MCF 10A (cell line): ENCODE measurements at regions of chr10 and their contacts with region 1.

Region 1: GRCh38 chr10:68156373-68157185 is 47.3 kb downstream of the MYPN start:
- DNase-seq: peak; percentile 80
- H3K4me3 Mint-ChIP-seq: no peak overlapping the region
- H3K27ac Mint-ChIP-seq: no peak overlapping the region
- H3K4me1 Mint-ChIP-seq: peaks cover 9% of the 10 kb centered on the region
- H3K27me3 Mint-ChIP-seq: no peaks in the 10 kb centered on the region
- CTCF ChIP-seq: peak; percentile 86

Region 2: GRCh38 chr10:67788025-67788886 is 368.3 kb before region 1 on chr10:
- CTCF ChIA-PET with region 1: no interaction called
- POLR2A ChIA-PET with region 1: no interaction called
- intact Hi-C with region 1: no loop called
- DNase-seq: peak; percentile 47
- H3K4me3 Mint-ChIP-seq: no peak overlapping the region
- H3K27ac Mint-ChIP-seq: no peak overlapping the region
- H3K4me1 Mint-ChIP-seq: peaks cover 16% of the 10 kb centered on the region
- H3K27me3 Mint-ChIP-seq: no peaks in the 10 kb centered on the region
- CTCF ChIP-seq: peak; percentile 39

Region 3: GRCh38 chr10:67875340-67876238 is 281.0 kb before region 1 on chr10:
- CTCF ChIA-PET with region 1: no interaction called
- POLR2A ChIA-PET with region 1: no interaction called
- intact Hi-C with region 1: no loop called
- DNase-seq: no peak
- H3K4me3 Mint-ChIP-seq: no peak overlapping the region
- H3K27ac Mint-ChIP-seq: no peak overlapping the region
- H3K4me1 Mint-ChIP-seq: no peaks in the 10 kb centered on the region
- H3K27me3 Mint-ChIP-seq: no peaks in the 10 kb centered on the region
- CTCF ChIP-seq: no peak

Region 4: GRCh38 chr10:68074775-68075549 is 81.6 kb before region 1 on chr10 and contains the start of gene HERC4:
- CTCF ChIA-PET with region 1: interaction called, 35 read pairs
- POLR2A ChIA-PET with region 1: interaction called, 11 read pairs
- intact Hi-C with region 1: no loop called
- DNase-seq: peak; percentile 93
- H3K4me3 Mint-ChIP-seq: peak within 1 kb of the TSS; percentile 95
- H3K27ac Mint-ChIP-seq: peak within 1 kb of the TSS; percentile 93
- H3K4me1 Mint-ChIP-seq: peaks cover 12% of the 10 kb centered on the region
- H3K27me3 Mint-ChIP-seq: no peaks in the 10 kb centered on the region
- CTCF ChIP-seq: no peak
- total RNA-seq, gene HERC4: 57.5 and 61.5 TPM in 2 replicates

Region 5: GRCh38 chr10:68088744-68089143 is 67.8 kb before region 1 on chr10:
- CTCF ChIA-PET with region 1: interaction called, 182 read pairs
- POLR2A ChIA-PET with region 1: interaction called, 34 read pairs
- intact Hi-C with region 1: loop called (anchors 1 kb)
- DNase-seq: peak; percentile 67
- H3K4me3 Mint-ChIP-seq: peak overlapping the region; percentile 50
- H3K27ac Mint-ChIP-seq: peak overlapping the region; percentile 94
- H3K4me1 Mint-ChIP-seq: peaks cover 27% of the 10 kb centered on the region
- H3K27me3 Mint-ChIP-seq: no peaks in the 10 kb centered on the region
- CTCF ChIP-seq: no peak

Region 6: DNA sequence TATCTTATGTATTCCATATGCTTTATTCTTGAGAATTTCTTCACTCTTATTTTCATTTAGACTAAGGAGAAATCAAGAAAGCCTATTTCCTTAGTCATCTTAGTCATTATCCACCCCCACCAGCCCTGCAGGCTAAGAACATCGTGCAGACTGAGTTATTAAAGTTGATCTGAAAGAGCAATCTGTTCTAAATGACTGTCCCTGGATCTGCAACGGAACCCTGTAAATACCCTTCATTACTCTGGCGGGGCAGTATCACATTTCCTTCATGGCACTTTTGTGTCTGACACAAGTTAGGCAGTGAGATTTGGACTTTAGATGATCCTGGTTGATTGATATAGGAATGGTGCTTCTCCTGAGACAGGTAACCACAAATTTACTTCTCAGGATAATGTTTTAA is 50.8 kb before region 1 on chr10:
- CTCF ChIA-PET with region 1: interaction called, 10 read pairs
- POLR2A ChIA-PET with region 1: interaction called, 3 read pairs
- intact Hi-C with region 1: no loop called
- DNase-seq: peak; percentile 54
- H3K4me3 Mint-ChIP-seq: peak overlapping the region; percentile 51
- H3K27ac Mint-ChIP-seq: peak overlapping the region; percentile 69
- H3K4me1 Mint-ChIP-seq: peaks cover 12% of the 10 kb centered on the region
- H3K27me3 Mint-ChIP-seq: no peaks in the 10 kb centered on the region
- CTCF ChIP-seq: no peak

Region 7: GRCh38 chr10:68208424-68209042 is 52.0 kb after region 1 on chr10:
- CTCF ChIA-PET with region 1: interaction called, 27 read pairs
- POLR2A ChIA-PET with region 1: no interaction called
- intact Hi-C with region 1: loop called (anchors 1 kb)
- DNase-seq: peak; percentile 79
- H3K4me3 Mint-ChIP-seq: no peak overlapping the region
- H3K27ac Mint-ChIP-seq: no peak overlapping the region
- H3K4me1 Mint-ChIP-seq: no peaks in the 10 kb centered on the region
- H3K27me3 Mint-ChIP-seq: no peaks in the 10 kb centered on the region
- CTCF ChIP-seq: peak; percentile 59

Region 8: GRCh38 chr10:68331455-68332258 is 175.1 kb after region 1 on chr10 and contains the start of gene HNRNPH3:
- CTCF ChIA-PET with region 1: interaction called, 5 read pairs
- POLR2A ChIA-PET with region 1: interaction called, 13 read pairs
- intact Hi-C with region 1: no loop called
- DNase-seq: peak; percentile 97
- H3K4me3 Mint-ChIP-seq: peak within 1 kb of the TSS; percentile 97
- H3K27ac Mint-ChIP-seq: peak within 1 kb of the TSS; percentile 99
- H3K4me1 Mint-ChIP-seq: peaks cover 29% of the 10 kb centered on the region
- H3K27me3 Mint-ChIP-seq: no peaks in the 10 kb centered on the region
- CTCF ChIP-seq: no peak
- total RNA-seq, gene HNRNPH3: 216 and 285 TPM in 2 replicates

Region 9: DNA sequence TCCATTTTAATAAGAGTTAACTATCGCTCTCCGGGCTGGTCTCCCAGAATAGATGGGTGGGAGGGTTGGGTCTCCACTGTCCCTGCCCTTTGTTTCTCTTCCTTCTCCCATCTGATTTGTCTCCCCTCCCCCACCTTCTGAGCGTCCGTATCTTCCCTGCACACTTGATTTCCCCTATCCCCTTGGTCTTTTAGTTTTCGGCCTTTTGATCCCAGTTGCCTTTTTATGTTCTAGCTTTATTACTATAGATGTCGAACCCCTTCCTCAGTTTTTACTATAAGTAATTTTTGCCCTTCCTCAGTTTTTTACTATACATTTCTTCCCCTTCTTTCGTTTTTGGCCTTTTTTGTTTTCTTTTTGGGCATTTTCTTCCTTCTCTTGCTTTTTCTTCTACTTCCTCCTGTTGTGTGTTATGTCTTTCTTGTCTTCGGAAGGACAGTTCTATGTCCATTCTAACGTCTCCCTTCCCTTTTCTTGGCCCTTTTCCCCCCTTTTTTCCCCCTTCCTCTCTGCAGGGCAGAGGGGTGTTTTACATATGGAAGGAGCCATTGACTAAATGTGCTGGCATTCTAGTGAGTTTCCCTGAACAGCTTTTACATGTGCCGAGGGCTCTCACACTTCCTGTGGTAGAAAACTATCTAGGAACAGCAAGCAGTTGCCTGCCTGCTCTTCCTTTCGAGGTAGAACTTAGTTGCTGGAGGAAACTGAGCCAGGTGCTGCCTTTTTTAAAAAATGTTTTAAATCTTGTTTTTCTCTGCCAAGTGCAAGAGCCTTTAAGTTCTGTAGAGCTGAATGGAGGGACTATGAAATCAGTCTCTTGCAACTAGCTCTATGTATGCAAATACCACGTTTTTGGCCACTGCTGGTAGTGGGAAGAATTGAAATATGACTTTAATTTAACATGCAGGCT is 406.3 kb after region 1 on chr10:
- CTCF ChIA-PET with region 1: no interaction called
- POLR2A ChIA-PET with region 1: no interaction called
- intact Hi-C with region 1: no loop called
- DNase-seq: no peak
- H3K4me3 Mint-ChIP-seq: no peak overlapping the region
- H3K27ac Mint-ChIP-seq: no peak overlapping the region
- H3K4me1 Mint-ChIP-seq: peaks cover 5% of the 10 kb centered on the region
- H3K27me3 Mint-ChIP-seq: peaks cover 11% of the 10 kb centered on the region
- CTCF ChIP-seq: no peak